Posterior cingulate gyrus (tissue), 11 donors: ENCODE measurements at regions of chr4 and their contacts with region 1.

Region 1: DNA sequence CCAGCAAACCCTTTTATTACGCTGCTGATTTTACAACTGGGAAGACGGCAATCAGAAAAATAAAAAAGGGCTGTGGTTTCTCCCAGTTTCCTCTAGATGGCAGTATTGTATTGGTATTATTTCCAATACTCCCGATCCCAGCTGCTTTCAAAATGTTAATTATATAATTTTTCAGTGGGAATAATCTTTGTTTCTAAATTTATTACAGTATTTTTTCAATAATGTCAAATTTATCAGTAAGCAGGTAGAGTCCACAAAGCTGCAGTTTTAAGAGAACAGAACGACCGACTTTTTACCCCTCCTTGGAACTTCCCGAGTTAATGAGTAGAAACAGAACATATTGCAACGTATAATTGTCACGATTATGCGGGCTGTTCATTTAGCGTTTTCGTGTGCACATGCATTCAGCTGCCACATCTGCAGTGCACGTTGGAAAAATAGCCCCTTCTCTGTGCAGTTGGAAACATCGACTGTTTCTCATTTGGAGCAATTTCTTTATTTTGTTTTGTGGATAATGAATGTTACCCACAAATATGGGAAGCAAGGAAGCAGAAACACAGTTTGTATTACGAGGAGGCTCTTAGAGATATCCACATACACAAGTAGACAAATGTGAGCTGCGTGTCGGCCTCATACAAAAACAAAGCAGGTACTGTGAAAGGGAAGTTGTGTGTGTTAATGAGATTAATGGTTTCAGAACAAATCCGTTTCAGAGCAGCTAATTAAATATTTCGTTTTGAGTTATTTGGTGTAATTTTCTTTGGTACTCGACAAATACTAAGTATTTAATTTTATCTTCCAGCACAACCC is 188.0 kb downstream of the STIM2 start:
- DNase-seq: no peak

Region 2: GRCh38 chr4:27084685-27085361 is 36.2 kb after region 1 on chr4:
- intact Hi-C with region 1: loop called (anchors 5 kb)
- DNase-seq: peak; percentile 50 to 94 (median 70)

Region 3: DNA sequence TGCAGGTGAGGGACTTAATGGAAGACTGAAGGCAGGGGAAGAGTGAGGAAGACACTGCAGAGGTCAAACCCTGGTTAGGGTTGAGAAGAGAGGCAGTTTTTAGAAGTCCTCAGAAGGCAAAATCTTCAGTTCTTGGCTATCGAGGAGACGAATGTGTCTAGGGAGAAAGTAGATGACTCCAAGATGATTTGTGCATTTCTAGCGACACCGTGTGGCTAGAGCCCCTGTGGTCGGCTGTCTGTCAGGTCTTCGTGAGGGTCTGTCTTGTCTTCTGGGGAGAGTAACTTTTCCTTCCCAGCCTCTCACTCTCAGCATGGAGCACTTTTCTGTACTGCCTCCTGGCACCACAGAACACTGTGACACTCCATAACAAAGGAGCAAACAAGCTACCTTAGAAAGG is 270.1 kb after region 1 on chr4:
- intact Hi-C with region 1: loop called (anchors 5 kb)
- DNase-seq: peak in 3 of 10 donors; percentile 8 to 33 (median 24)